CD14-positive monocyte (primary cell): ENCODE measurements at regions of chr6 and their contacts with region 1.

Region 1: DNA sequence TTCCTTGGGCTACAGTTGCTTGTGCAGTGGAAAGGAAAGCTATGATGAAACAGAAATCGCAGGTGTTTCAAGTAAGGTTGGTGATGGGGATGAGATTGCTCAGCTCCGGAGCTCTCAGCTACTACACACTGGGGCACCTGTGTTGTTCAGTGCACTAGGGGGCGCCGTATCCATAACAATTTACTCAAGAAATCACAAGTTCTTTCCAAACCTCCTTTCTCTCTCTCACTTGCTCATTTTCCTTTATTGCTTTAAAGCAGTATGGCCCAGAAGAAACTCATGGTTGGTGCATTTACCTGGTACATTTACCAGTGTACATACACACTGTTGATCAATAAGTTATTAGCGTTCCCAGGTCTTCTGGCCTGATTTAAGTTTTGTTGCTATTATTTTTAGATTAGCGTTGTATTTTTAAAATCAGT is 235.2 kb upstream of the TAB2 start:
- DNase-seq: peak; percentile 53 to 68 (median 55)
- H3K4me3 ChIP-seq: no peak overlapping the region
- H3K4me3 Mint-ChIP-seq: no peak overlapping the region
- H3K27ac ChIP-seq: no peak overlapping the region
- H3K27ac Mint-ChIP-seq: no peak overlapping the region
- H3K4me1 ChIP-seq: peaks cover 12 to 20% of the 10 kb centered on the region in 2 donors
- H3K4me1 Mint-ChIP-seq: peaks cover 24% of the 10 kb centered on the region
- H3K27me3 ChIP-seq: no peaks in the 10 kb centered on the region
- H3K27me3 Mint-ChIP-seq: peaks cover 0 to 1% (median 0%) of the 10 kb centered on the region in 3 donors
- CTCF ChIP-seq: peak; percentile 83

Region 2: GRCh38 chr6:149170564-149171452 is 88.5 kb after region 1 on chr6:
- intact Hi-C with region 1: loop called in 1 of 2 experiments (anchors 10 kb)
- DNase-seq: no peak
- H3K4me3 ChIP-seq: no peak overlapping the region
- H3K4me3 Mint-ChIP-seq: no peak overlapping the region
- H3K27ac ChIP-seq: no peak overlapping the region
- H3K27ac Mint-ChIP-seq: peak overlapping the region in 1 of 7 donors; percentile 77
- H3K4me1 ChIP-seq: peaks cover 0 to 4% of the 10 kb centered on the region in 2 donors
- H3K4me1 Mint-ChIP-seq: peaks cover 17% of the 10 kb centered on the region
- H3K27me3 ChIP-seq: no peaks in the 10 kb centered on the region
- H3K27me3 Mint-ChIP-seq: peaks cover 3 to 9% (median 6%) of the 10 kb centered on the region in 3 donors
- CTCF ChIP-seq: no peak

Region 3: GRCh38 chr6:149211046-149211571 is 128.8 kb after region 1 on chr6:
- intact Hi-C with region 1: no loop called
- DNase-seq: peak; percentile 67 to 89 (median 83)
- H3K4me3 ChIP-seq: peak overlapping the region in 1 of 3 experiments; percentile 8
- H3K4me3 Mint-ChIP-seq: peak overlapping the region in 1 of 2 donors; percentile 70
- H3K27ac ChIP-seq: peak overlapping the region in 1 of 2 donors; percentile 89
- H3K27ac Mint-ChIP-seq: peak overlapping the region; percentile 89 to 99 (median 95)
- H3K4me1 ChIP-seq: peaks cover 38 to 46% of the 10 kb centered on the region in 2 donors
- H3K4me1 Mint-ChIP-seq: no peaks in the 10 kb centered on the region
- H3K27me3 ChIP-seq: no peaks in the 10 kb centered on the region
- H3K27me3 Mint-ChIP-seq: no peaks in the 10 kb centered on the region
- CTCF ChIP-seq: no peak